ENCODE measurements at regions of chr3 and their contacts with region 1.

Region 1: GRCh38 chr3:25594007-25594502 is 70.7 kb downstream of the TOP2B start:
- DNase-seq: peak; percentile 78
- ATAC-seq: peak; percentile 48
- H3K4me3 ChIP-seq: no peak overlapping the region
- H3K27ac ChIP-seq: no peak overlapping the region
- H3K4me1 ChIP-seq: no peaks in the 10 kb centered on the region
- H3K27me3 ChIP-seq: no peaks in the 10 kb centered on the region
- CTCF ChIP-seq: peak; percentile 91

Region 2: DNA sequence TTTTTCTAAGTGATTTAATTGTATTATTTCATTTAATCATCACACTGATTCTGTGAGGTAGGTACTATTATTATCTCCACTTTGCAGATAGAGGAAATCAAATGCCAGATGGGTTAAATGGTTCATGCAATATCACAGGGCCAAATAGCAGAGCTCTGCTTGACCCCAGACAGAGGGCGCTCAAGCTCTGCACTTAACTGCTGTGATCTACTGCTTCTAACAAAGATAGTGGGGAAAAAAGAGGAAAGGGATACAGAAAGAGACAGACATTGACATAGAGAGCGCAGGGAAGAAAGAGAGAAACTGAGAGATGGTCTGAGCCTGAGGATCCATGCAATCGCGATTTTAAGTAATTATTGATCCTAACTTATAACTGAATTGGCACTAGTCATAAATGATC is 820.3 kb before region 1 on chr3:
- CTCF ChIA-PET with region 1: interaction called, 3 read pairs
- POLR2A ChIA-PET with region 1: no interaction called
- intact Hi-C with region 1: loop called (anchors 2 kb)
- DNase-seq: peak; percentile 65
- ATAC-seq: peak; percentile 93
- H3K4me3 ChIP-seq: no peak overlapping the region
- H3K27ac ChIP-seq: no peak overlapping the region
- H3K4me1 ChIP-seq: no peaks in the 10 kb centered on the region
- H3K27me3 ChIP-seq: peaks cover 29% of the 10 kb centered on the region
- CTCF ChIP-seq: peak; percentile 93

Region 3: GRCh38 chr3:24963762-24964625 is 630.1 kb before region 1 on chr3:
- CTCF ChIA-PET with region 1: no interaction called
- POLR2A ChIA-PET with region 1: no interaction called
- intact Hi-C with region 1: loop called (anchors 5 kb)
- DNase-seq: peak; percentile 48
- ATAC-seq: 0 out of 2 replicates have a peak, but pooled peaks have one; percentile 46
- H3K4me3 ChIP-seq: no peak overlapping the region
- H3K27ac ChIP-seq: no peak overlapping the region
- H3K4me1 ChIP-seq: no peaks in the 10 kb centered on the region
- H3K27me3 ChIP-seq: peaks cover 24% of the 10 kb centered on the region; the same call in 1 of the 2 replicates
- CTCF ChIP-seq: peak; percentile 77

Region 4: DNA sequence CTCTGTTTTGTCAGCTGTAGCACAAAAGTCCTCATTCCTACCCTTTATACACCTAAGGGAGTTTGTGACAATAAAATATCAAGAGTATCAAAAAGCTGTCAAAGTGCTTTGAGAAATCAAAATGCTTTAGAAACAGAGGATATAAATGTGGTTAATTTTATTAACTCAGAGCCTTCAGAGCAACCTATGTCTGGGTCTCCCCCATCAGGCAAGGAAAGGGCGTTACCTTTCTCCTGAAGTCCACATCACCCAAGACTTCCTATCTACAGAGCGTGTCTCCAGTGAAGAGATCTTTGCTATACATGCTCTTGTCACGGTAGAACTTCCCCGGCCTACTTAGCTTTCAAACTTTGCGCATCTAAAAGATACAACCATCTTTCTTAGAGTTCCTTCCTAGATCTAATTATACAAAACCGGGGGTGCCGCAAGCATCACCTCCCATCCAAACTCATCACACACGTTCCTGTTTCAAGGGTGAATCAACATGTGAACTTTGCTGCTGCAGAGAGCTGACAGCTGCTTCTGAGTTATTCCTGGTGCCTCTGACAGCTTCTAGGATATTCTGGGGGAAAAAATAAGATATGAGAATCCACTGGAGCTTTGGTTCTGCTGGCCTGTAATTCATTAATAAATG is 73.0 kb before region 1 on chr3:
- CTCF ChIA-PET with region 1: no interaction called
- POLR2A ChIA-PET with region 1: no interaction called
- intact Hi-C with region 1: no loop called
- DNase-seq: no peak
- ATAC-seq: no peak
- H3K4me3 ChIP-seq: no peak overlapping the region
- H3K27ac ChIP-seq: no peak overlapping the region
- H3K4me1 ChIP-seq: no peaks in the 10 kb centered on the region
- H3K27me3 ChIP-seq: peaks cover 44% of the 10 kb centered on the region
- CTCF ChIP-seq: no peak

Region 5: GRCh38 chr3:25532431-25533162 is 61.5 kb before region 1 on chr3:
- CTCF ChIA-PET with region 1: interaction called, 4 read pairs
- POLR2A ChIA-PET with region 1: no interaction called
- intact Hi-C with region 1: loop called (anchors 1 kb)
- DNase-seq: peak; percentile 72
- ATAC-seq: peak; percentile 35; the same call in 1 of the 2 replicates
- H3K4me3 ChIP-seq: no peak overlapping the region
- H3K27ac ChIP-seq: no peak overlapping the region
- H3K4me1 ChIP-seq: no peaks in the 10 kb centered on the region
- H3K27me3 ChIP-seq: peaks cover 24% of the 10 kb centered on the region
- CTCF ChIP-seq: peak; percentile 88

Measured in PC-3 (cell line).